ENCODE measurements at regions of chr10 and their contacts with region 1.

Region 1: GRCh38 chr10:114304017-114304570 is 65.0 kb downstream of the VWA2 start:
- DNase-seq: peak; percentile 77
- H3K27ac ChIP-seq: no peak overlapping the region
- CTCF ChIP-seq: peak; percentile 78

Region 2: GRCh38 chr10:114403541-114404161 is 99.6 kb after region 1 on chr10:
- CTCF ChIA-PET with region 1: interaction called, 18 read pairs
- POLR2A ChIA-PET with region 1: interaction called, 4 read pairs
- DNase-seq: peak; percentile 65
- H3K27ac ChIP-seq: peak overlapping the region; percentile 71
- CTCF ChIP-seq: peak; percentile 32; the same call in 1 of the 2 replicates

Region 3: GRCh38 chr10:114458955-114459354 is 154.9 kb after region 1 on chr10:
- CTCF ChIA-PET with region 1: interaction called, 12 read pairs
- POLR2A ChIA-PET with region 1: no interaction called
- DNase-seq: peak; percentile 41
- H3K27ac ChIP-seq: no peak overlapping the region
- CTCF ChIP-seq: peak; percentile 30

Measured in RWPE1 (cell line).